Posterior vena cava (tissue), 2 donors: ENCODE measurements at regions of chr2 and their contacts with region 1.

Region 1: GRCh38 chr2:219543601-219544358 is at the starts of genes CHPF and TMEM198:
- DNase-seq: peak; percentile 100
- total RNA-seq, gene CHPF: 42.9 to 51.1 TPM
- total RNA-seq, gene TMEM198: 3.0 to 3.2 TPM

Region 2: DNA sequence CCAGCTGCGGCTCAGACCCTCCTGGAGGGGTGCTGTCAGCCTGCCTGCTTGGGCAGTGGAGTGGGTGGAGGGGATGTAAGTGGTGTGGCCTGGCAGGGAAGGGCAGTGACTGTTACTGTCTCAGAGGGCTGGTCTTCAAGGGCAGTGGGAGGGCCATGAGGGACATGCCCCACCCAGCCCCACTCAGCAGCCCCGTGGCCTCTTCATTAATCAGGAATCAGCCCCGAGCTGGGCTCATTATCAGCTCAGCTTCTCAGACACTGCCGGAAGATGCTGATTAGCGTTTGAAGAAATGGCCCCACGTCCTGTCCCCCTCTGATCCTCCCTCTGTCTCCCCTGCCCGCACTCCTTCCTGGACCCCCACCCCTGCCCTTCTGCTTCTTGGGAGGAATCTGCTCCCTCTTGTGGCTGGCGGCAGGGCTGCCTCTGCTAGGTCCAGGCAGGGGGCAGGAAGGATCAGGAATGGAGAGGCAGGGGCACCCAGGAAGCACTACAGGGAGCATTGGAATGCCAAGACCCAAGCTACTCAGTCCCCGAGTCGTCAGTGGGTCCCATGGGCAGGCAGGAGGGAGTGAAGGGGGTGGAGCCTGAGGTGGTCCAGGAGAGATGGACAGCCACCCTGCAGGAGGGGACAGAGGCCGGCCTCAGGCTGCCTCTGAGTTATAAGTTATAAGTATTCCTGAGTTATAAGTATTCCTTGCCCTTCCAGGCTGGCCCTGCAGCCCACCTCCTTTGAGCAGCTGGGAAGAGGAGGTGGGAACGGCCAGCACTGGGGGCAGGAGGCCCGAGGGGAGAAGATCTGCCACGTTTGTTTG is 22.5 kb before region 1 on chr2:
- intact Hi-C with region 1: no loop called
- DNase-seq: no peak

Region 3: DNA sequence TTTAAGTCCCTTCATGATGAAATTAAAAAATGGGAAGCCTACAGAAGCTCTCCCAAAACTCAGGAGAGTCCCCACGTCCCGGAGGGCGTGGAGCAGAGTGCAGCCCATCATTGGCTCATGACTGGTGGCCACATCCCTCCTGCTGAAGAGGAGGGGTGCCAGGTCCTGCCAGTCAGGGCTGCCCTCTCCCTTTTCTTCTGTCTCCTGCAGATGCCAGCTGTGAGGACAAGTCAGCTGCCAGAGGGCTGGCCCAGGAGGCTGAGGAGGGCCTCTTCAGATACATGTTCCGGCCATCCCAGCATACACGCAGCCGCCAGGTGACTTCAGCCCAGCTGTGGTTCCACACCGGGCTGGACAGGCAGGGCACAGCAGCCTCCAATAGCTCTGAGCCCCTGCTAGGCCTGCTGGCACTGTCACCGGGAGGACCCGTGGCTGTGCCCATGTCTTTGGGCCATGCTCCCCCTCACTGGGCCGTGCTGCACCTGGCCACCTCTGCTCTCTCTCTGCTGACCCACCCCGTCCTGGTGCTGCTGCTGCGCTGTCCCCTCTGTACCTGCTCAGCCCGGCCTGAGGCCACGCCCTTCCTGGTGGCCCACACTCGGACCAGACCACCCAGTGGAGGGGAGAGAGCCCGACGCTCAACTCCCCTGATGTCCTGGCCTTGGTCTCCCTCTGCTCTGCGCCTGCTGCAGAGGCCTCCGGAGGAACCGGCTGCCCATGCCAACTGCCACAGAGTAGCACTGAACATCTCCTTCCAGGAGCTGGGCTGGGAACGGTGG is 30.9 kb after region 1 on chr2:
- intact Hi-C with region 1: loop called in 1 of 2 experiments (anchors 1 kb)
- DNase-seq: no peak

Region 4: DNA sequence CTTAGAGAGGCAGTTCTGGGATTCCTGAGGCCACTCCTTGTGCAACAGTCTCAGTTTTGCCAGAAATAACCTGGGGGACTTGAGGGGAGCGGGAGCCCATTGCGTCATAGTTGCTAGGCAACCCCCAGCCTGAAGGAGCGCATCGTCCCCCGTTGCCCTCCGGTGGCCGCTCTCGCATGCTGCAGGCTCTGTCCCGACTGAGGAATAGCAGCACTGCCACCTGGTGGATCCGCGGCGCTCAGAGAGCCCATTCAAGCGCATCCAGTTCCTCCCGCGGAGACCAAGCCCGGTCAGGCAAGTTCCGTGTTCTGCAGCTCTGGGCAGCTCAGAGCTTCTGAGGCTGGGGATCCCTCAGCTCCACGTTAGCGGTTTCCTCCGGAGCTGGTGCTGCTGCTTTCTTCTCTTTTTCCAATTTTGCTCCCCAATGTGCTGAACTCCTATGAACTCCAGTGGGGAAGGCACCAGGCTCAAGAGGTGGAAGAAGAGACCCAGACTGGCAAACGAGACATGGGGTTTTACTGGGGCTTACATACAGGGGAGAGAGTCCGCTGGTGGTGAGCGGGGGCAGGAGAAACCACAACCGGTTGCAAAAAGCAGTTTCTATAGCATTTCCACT is 98.8 kb after region 1 on chr2:
- intact Hi-C with region 1: loop called (anchors 2 to 10 kb)
- DNase-seq: peak; percentile 99

Region 5: DNA sequence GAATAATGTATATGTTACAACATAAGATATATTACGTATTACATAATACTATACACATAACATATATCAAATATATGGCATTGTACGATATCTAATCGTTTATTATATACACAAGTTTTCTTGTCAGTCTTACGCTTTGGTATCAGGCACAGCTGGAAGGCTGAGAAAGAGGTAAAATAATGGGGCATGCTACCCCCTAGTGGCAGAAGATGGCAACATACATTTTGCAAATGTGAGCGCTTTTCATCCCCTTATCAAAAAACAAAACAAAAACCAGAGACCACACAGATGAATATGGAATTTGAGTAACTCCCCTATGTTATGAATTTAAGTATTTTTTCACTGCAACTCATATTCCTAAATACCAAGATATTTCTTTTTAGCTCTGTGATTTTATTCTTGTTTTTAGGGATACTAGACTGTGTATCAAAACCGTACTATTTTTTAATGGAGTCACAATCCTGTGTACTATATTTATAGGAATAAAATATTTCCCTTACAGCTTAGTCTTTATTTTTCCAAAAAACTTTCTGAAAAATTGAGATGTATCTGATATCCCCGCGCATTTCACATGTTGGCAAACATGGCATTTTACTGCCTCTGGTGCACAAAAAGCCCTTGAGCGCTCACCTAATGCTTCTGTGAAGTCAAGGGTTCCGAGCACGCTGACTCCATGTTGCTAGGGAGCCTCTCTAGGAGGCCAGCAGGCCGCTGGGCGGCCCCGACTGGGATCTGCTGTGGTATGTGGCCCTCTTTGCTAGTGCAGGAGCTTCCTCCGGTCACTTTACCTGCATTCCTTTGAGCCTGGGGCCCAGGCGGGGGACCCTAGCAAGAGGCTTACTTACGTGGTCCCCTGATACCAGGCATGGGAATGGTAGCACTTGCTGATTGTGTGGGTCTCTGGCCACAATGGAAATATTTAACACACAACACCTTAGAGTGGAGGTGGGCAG is 146.2 kb after region 1 on chr2:
- intact Hi-C with region 1: loop called in 1 of 2 experiments (anchors 2 kb)
- DNase-seq: no peak